ENCODE measurements at regions of chr11 and their contacts with region 1.

Region 1: DNA sequence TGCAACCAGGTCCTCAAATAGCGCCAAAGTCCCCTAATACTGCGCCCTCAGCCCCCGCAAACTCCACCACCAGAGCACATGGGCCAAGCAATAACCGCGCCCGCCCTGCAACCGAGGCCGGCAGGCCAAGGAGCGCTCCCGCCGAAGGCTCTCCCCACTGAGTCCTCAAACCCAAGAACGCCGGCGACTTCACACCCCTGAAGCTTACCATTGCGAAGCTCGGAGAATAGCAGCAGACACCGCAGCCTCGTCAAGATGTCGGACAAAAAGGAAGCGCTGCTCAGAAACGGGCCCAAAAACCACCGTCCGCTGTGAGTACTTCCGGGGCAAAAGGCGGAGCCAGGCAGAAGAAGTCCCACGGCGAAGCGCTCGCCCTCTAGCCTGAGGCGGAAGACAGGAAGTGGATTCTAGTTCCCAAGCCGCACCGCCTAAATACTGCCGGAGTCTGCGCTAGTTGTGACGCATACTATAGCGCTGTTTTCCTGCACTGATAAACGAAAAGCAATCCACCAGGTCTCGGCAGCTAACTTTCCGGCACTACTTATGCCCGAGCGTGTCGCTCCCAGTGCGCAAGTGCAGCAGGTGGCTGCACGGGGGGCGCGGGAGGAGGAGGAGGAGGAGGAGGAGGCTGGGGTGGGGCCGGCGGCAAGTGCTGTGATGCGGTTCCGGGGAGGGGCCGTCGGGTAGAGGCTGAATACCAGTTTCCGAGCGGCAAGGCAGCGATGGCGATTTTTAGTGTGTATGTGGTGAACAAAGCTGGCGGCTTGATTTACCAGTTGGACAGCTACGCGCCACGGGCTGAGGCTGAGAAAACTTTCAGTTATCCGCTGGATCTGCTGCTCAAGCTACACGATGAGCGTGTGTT is at the starts of genes RPS25 and TRAPPC4:
- DNase-seq: peak; percentile 90 to 99 (median 95)
- ATAC-seq: peak; percentile 86
- H3K4me3 ChIP-seq: peak within 1 kb of the TSS; percentile 98
- H3K4me3 Mint-ChIP-seq: peak within 1 kb of the TSS; percentile 99
- H3K27ac ChIP-seq: peak within 1 kb of the TSS; percentile 98 to 99
- H3K27ac Mint-ChIP-seq: peak within 1 kb of the TSS; percentile 99
- H3K4me1 ChIP-seq: peaks cover 44% of the 10 kb centered on the region
- H3K4me1 Mint-ChIP-seq: peaks cover 55% of the 10 kb centered on the region
- H3K27me3 ChIP-seq: no peaks in the 10 kb centered on the region
- H3K27me3 Mint-ChIP-seq: no peaks in the 10 kb centered on the region
- CTCF ChIP-seq: no peak
- total RNA-seq, gene RPS25: 2,737 to 2,869 TPM
- total RNA-seq, gene TRAPPC4: 65.6 to 73.3 TPM

Region 2: GRCh38 chr11:118997627-118998387 is 20.5 kb before region 1 on chr11 and contains the start of gene CENATAC:
- CTCF ChIA-PET with region 1: interaction called, 4 read pairs
- POLR2A ChIA-PET with region 1: interaction called, 15 read pairs
- intact Hi-C with region 1: loop called (anchors 1 kb)
- DNase-seq: peak; percentile 87 to 97 (median 96)
- ATAC-seq: peak; percentile 94
- H3K4me3 ChIP-seq: peak within 1 kb of the TSS; percentile 89 to 95
- H3K4me3 Mint-ChIP-seq: peak within 1 kb of the TSS; percentile 84
- H3K27ac ChIP-seq: peak within 1 kb of the TSS; percentile 59 to 92
- H3K27ac Mint-ChIP-seq: peak within 1 kb of the TSS; percentile 88
- H3K4me1 ChIP-seq: peaks cover 23% of the 10 kb centered on the region
- H3K4me1 Mint-ChIP-seq: peaks cover 36% of the 10 kb centered on the region
- H3K27me3 ChIP-seq: no peaks in the 10 kb centered on the region
- H3K27me3 Mint-ChIP-seq: no peaks in the 10 kb centered on the region
- CTCF ChIP-seq: no peak
- total RNA-seq, gene CENATAC: 103 to 116 TPM

Region 3: GRCh38 chr11:119057000-119057769 is 38.9 kb after region 1 on chr11 and contains the start of gene HYOU1:
- CTCF ChIA-PET with region 1: no interaction called
- POLR2A ChIA-PET with region 1: interaction called, 20 read pairs
- intact Hi-C with region 1: loop called (anchors 1 kb)
- DNase-seq: peak; percentile 97 to 99 (median 98)
- ATAC-seq: peak; percentile 96
- H3K4me3 ChIP-seq: peak within 1 kb of the TSS; percentile 82 to 83
- H3K4me3 Mint-ChIP-seq: peak within 1 kb of the TSS; percentile 96
- H3K27ac ChIP-seq: peak within 1 kb of the TSS; percentile 81 to 85
- H3K27ac Mint-ChIP-seq: peak within 1 kb of the TSS; percentile 96
- H3K4me1 ChIP-seq: peaks cover 21% of the 10 kb centered on the region
- H3K4me1 Mint-ChIP-seq: peaks cover 35% of the 10 kb centered on the region
- H3K27me3 ChIP-seq: no peaks in the 10 kb centered on the region
- H3K27me3 Mint-ChIP-seq: no peaks in the 10 kb centered on the region
- CTCF ChIP-seq: no peak
- total RNA-seq, gene HYOU1: 106 to 109 TPM

Region 4: GRCh38 chr11:119101759-119102423 is 83.6 kb after region 1 on chr11 and contains the start of gene DPAGT1:
- CTCF ChIA-PET with region 1: no interaction called
- POLR2A ChIA-PET with region 1: interaction called, 9 read pairs
- intact Hi-C with region 1: loop called in 1 of 2 experiments (anchors 1 kb)
- DNase-seq: peak; percentile 68 to 93 (median 84)
- ATAC-seq: peak; percentile 87
- H3K4me3 ChIP-seq: peak within 1 kb of the TSS; percentile 81 to 87
- H3K4me3 Mint-ChIP-seq: peak within 1 kb of the TSS; percentile 98
- H3K27ac ChIP-seq: peak within 1 kb of the TSS; percentile 94 to 97
- H3K27ac Mint-ChIP-seq: peak within 1 kb of the TSS; percentile 97
- H3K4me1 ChIP-seq: peaks cover 31% of the 10 kb centered on the region
- H3K4me1 Mint-ChIP-seq: peaks cover 53% of the 10 kb centered on the region
- H3K27me3 ChIP-seq: no peaks in the 10 kb centered on the region
- H3K27me3 Mint-ChIP-seq: no peaks in the 10 kb centered on the region
- CTCF ChIP-seq: no peak
- total RNA-seq, gene DPAGT1: 9.4 to 9.9 TPM

Region 5: DNA sequence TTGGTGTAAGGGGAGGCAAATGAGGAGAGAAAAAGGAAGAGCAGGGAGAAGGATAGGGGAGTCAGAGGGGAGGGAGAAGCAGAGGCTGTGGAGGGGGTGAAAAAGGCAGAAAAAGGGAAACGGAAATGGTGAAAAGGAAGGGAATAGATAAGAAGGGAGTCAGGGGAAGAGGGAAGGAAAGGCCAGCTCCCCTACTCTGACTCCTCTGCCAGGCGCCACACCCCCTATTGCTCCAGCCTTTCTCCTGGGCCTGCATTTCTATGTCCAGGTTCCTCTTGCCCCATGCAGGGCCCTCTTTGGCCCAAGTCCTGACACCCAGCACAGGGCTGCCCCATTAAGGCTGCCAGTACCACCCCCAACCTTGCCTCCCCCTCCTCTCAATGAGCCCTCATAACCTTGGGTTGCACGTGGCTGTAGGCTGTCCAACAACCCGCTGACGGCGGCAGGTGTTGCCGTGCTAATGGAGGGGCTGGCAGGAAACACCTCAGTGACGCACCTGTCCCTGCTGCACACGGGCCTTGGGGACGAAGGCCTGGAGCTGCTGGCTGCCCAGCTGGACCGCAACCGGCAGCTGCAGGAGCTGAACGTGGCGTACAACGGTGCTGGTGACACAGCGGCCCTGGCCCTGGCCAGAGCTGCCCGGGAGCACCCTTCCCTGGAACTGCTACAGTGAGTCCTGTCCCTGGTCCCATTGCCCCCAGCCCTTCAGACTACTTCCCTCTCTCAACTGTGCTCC is 163.5 kb after region 1 on chr11:
- CTCF ChIA-PET with region 1: no interaction called
- POLR2A ChIA-PET with region 1: no interaction called
- intact Hi-C with region 1: no loop called
- DNase-seq: no peak
- ATAC-seq: no peak
- H3K4me3 ChIP-seq: no peak overlapping the region
- H3K4me3 Mint-ChIP-seq: no peak overlapping the region
- H3K27ac ChIP-seq: no peak overlapping the region
- H3K27ac Mint-ChIP-seq: no peak overlapping the region
- H3K4me1 ChIP-seq: peaks cover 10% of the 10 kb centered on the region
- H3K4me1 Mint-ChIP-seq: peaks cover 4% of the 10 kb centered on the region
- H3K27me3 ChIP-seq: no peaks in the 10 kb centered on the region
- H3K27me3 Mint-ChIP-seq: no peaks in the 10 kb centered on the region
- CTCF ChIP-seq: no peak

Region 6: GRCh38 chr11:119381181-119381988 is 363.1 kb after region 1 on chr11 and contains the start of gene USP2:
- CTCF ChIA-PET with region 1: no interaction called
- POLR2A ChIA-PET with region 1: no interaction called
- intact Hi-C with region 1: loop called in 1 of 2 experiments (anchors 5 kb)
- DNase-seq: peak; percentile 94 to 98 (median 97)
- ATAC-seq: peak; percentile 98
- H3K4me3 ChIP-seq: peak within 1 kb of the TSS; percentile 74 to 80
- H3K4me3 Mint-ChIP-seq: no peak within 1 kb of the TSS
- H3K27ac ChIP-seq: peak within 1 kb of the TSS; percentile 57 to 73
- H3K27ac Mint-ChIP-seq: peak within 1 kb of the TSS; percentile 21
- H3K4me1 ChIP-seq: peaks cover 16% of the 10 kb centered on the region
- H3K4me1 Mint-ChIP-seq: peaks cover 7% of the 10 kb centered on the region
- H3K27me3 ChIP-seq: peaks cover 0 to 14% of the 10 kb centered on the region in 2 experiments
- H3K27me3 Mint-ChIP-seq: no peaks in the 10 kb centered on the region
- CTCF ChIP-seq: peak; percentile 92
- total RNA-seq, gene USP2: 3.4 to 5.9 TPM

Measured in CD8-positive, alpha-beta T cell (primary cell).